GM12878 (cell line): ENCODE measurements at regions of chr1 and their contacts with region 1.

Region 1: DNA sequence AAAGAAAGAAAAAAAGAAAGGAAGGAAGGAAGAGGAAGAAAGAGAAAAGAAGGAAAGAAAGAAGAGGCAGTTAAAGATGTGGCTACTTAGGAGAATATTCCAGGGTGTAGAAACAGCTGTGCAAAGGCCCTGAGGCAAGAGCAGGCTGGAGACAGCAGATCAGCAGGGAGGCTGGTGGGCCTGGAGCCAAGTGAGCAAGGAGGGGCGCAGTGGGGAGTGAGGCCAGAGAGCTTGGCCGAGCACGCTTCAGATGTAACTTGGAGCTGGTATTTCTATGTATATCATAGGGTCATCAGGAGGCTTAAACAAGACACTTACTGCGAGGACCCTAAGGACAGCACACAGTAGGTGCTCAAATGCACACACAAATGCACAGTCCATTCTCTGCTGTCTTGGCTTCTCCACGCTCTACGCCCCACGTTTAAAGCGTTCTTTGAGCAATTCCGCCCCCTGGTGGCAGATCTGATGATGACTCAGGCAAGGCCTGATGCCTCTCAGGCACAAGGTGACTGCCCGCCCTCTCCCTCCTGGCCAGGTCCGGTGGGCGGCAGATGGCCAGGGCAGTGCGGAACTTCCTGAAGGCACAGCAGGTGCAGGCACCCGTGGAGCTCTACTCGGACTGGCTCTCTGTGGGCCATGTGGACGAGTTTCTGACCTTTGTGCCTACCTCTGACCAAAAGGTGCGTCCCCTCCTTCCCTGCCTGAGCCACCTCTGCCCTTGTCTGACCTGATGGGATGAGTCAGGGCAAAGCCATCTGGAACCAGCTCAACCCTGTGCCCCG is 11.9 kb upstream of the PADI3 start:
- DNase-seq: peak; percentile 31
- ATAC-seq: peak; percentile 93
- H3K4me3 ChIP-seq: no peak overlapping the region
- H3K27ac ChIP-seq: no peak overlapping the region
- H3K4me1 ChIP-seq: no peaks in the 10 kb centered on the region
- H3K27me3 ChIP-seq: peaks cover 0 to 2% of the 10 kb centered on the region in 2 experiments; a peak in 1 of 4 replicates
- CTCF ChIP-seq: peak; percentile 78 to 92 (median 82)
- EP300 ChIP-seq: no peak
- POLR2A ChIP-seq: no peak
- RAD21 ChIP-seq: peak; percentile 95

Region 2: GRCh38 chr1:16946646-16947045 is 290.3 kb before region 1 on chr1:
- CTCF ChIA-PET with region 1: no interaction called
- POLR2A ChIA-PET with region 1: no interaction called
- RAD21 ChIA-PET with region 1: interaction called, 3 read pairs
- SMC1A ChIA-PET with region 1: no interaction called
- in situ Hi-C with region 1: loop called (anchors 10 kb)
- intact Hi-C with region 1: no loop called
- DNase-seq: no peak
- ATAC-seq: no peak
- H3K4me3 ChIP-seq: no peak overlapping the region
- H3K27ac ChIP-seq: no peak overlapping the region
- H3K4me1 ChIP-seq: no peaks in the 10 kb centered on the region
- H3K27me3 ChIP-seq: no peaks in the 10 kb centered on the region
- CTCF ChIP-seq: no peak
- EP300 ChIP-seq: no peak
- POLR2A ChIP-seq: no peak
- RAD21 ChIP-seq: no peak

Region 3: GRCh38 chr1:17059739-17060460 is 177.1 kb before region 1 on chr1:
- CTCF ChIA-PET with region 1: interaction called, 32 read pairs
- POLR2A ChIA-PET with region 1: interaction called, 3 read pairs
- RAD21 ChIA-PET with region 1: interaction called, 11 read pairs
- SMC1A ChIA-PET with region 1: interaction called, 29 read pairs
- in situ Hi-C with region 1: loop called (anchors 5 kb)
- intact Hi-C with region 1: loop called (anchors 1 kb)
- DNase-seq: peak; percentile 30
- ATAC-seq: peak; percentile 100
- H3K4me3 ChIP-seq: no peak overlapping the region
- H3K27ac ChIP-seq: no peak overlapping the region
- H3K4me1 ChIP-seq: peaks cover 6% of the 10 kb centered on the region; the same call in 1 of the 2 replicates
- H3K27me3 ChIP-seq: no peaks in the 10 kb centered on the region
- CTCF ChIP-seq: peak; percentile 80 to 93 (median 81)
- EP300 ChIP-seq: no peak
- POLR2A ChIP-seq: no peak
- RAD21 ChIP-seq: peak; percentile 66

Region 4: DNA sequence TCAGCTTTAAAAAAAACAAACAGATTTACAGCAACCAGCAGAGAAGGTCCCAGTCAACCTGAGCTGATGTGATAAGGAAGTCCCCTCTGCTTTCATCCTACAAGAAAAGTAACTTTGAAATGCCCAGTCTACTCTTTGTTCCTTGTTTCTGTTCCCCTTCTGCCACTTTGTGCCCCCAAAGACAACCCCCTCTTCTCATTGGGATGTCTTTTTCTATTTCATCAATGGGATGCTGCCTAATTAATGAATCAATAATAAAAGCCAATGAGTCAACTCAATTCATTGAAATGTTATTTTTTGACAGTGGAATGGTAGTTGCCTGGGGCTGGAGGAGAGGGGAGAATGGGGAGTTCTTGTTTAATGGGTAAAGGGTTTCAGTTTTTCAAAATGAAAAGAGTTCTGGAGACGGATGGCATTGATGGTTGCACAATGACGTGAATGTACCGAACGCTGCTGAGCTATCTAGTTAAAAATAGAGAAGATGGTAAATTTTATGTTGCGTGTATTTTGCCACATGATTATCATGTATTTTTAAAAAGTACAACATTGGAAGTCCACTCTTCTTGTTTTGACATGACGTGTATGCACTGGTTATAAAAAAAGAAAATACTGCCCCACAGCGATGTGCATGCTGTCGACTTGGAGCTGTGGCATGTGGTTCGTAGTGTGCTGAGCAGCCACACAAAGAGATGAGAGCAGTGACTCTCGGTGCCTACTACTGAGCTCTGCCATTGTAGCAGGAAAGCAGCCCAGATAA is 95.4 kb before region 1 on chr1:
- CTCF ChIA-PET with region 1: interaction called, 13 read pairs
- POLR2A ChIA-PET with region 1: interaction called, 5 read pairs
- RAD21 ChIA-PET with region 1: interaction called, 8 read pairs
- SMC1A ChIA-PET with region 1: interaction called, 27 read pairs
- in situ Hi-C with region 1: no loop called
- intact Hi-C with region 1: no loop called
- DNase-seq: peak; percentile 85
- ATAC-seq: peak; percentile 90
- H3K4me3 ChIP-seq: no peak overlapping the region
- H3K27ac ChIP-seq: peak overlapping the region; percentile 78
- H3K4me1 ChIP-seq: peaks cover 15% of the 10 kb centered on the region
- H3K27me3 ChIP-seq: no peaks in the 10 kb centered on the region
- CTCF ChIP-seq: peak in 1 of 3 experiments; percentile 32; a peak in 1 of 6 replicates
- EP300 ChIP-seq: peak; percentile 45 to 84; a peak in 2 of 4 replicates
- POLR2A ChIP-seq: no peak; the same call in 1 of the 2 replicates
- RAD21 ChIP-seq: 0 out of 2 replicates have a peak, but pooled peaks have one; percentile 5

Region 5: GRCh38 chr1:17190010-17190995 is 46.7 kb before region 1 on chr1:
- CTCF ChIA-PET with region 1: no interaction called
- POLR2A ChIA-PET with region 1: no interaction called
- RAD21 ChIA-PET with region 1: no interaction called
- SMC1A ChIA-PET with region 1: no interaction called
- in situ Hi-C with region 1: no loop called
- intact Hi-C with region 1: no loop called
- DNase-seq: no peak
- ATAC-seq: no peak
- H3K4me3 ChIP-seq: no peak overlapping the region
- H3K27ac ChIP-seq: no peak overlapping the region
- H3K4me1 ChIP-seq: no peaks in the 10 kb centered on the region
- H3K27me3 ChIP-seq: no peaks in the 10 kb centered on the region; a peak in 1 of 4 replicates
- CTCF ChIP-seq: no peak
- EP300 ChIP-seq: no peak
- POLR2A ChIP-seq: no peak
- RAD21 ChIP-seq: no peak

Region 6: DNA sequence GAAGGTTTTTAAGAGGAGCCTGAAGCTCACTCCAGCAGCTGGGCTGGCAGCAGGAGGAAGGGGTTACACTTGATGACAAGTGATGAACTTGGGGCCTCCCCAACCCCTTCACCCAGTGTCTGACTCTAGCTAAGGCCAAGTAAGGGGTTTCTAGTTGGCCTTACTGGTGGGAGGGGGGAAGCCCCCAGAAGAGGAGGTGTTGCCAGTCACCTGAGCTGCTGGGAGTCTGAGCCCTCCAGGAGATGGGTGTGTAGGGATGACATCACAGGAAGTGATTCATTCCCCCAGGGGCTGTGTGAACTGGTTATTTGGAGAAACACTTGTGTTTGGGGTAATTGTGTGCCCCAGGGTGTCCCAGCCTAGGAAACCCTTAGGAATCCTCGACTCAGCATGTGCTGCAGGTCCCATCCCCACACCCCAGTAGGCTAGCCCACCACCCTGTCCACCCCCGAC is 29.0 kb before region 1 on chr1:
- CTCF ChIA-PET with region 1: interaction called, 24 read pairs
- POLR2A ChIA-PET with region 1: interaction called, 5 read pairs
- RAD21 ChIA-PET with region 1: interaction called, 3 read pairs
- SMC1A ChIA-PET with region 1: interaction called, 5 read pairs
- in situ Hi-C with region 1: no loop called
- intact Hi-C with region 1: no loop called
- DNase-seq: peak; percentile 72
- ATAC-seq: peak; percentile 87
- H3K4me3 ChIP-seq: no peak overlapping the region
- H3K27ac ChIP-seq: no peak overlapping the region
- H3K4me1 ChIP-seq: peaks cover 14% of the 10 kb centered on the region
- H3K27me3 ChIP-seq: peaks cover 0 to 2% of the 10 kb centered on the region in 2 experiments; a peak in 2 of 4 replicates
- CTCF ChIP-seq: no peak
- EP300 ChIP-seq: peak in 1 of 2 experiments; percentile 61; a peak in 1 of 4 replicates
- POLR2A ChIP-seq: no peak
- RAD21 ChIP-seq: no peak

Region 7: DNA sequence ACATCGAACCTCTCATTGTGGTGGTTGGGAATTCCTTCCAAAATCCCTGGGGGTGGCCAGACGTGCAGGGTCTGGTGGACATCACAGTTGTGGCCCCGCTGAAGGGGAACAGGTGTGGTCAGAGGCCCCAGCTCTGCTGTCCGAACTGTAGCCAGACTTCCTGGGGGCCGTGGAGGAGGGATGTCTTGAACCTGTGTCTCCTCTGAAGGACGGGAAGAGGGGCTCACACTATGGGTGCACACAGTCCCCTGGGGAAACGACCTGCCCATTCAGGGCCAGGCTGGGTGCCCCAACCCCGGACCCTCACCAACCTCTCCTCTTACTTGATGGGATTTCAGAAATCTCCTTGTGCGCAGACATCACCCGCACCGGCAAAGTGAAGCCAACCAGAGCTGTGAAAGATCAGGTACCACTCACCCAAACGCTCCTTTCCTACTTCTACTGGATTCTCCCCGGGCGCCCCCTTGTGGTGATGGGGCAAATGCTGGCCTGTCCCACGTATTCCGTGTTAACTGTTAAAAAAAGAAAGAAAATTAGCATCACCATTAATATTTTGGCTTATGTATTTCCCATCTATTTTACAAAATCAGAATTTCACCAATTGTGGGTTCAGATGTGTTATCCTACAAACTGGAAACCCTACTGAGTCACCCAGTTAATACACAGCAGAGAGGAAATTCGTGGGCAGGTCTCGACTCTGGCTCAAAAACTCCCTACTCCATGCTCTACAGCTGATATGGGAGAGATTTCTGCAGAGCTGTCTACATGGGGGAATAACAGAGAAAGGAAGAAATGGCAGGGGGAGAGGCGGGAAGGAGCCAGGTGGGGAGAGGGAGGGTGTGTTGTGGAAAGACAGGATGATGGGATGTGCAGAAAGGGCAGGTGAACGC is 99.1 kb after region 1 on chr1:
- CTCF ChIA-PET with region 1: no interaction called
- POLR2A ChIA-PET with region 1: no interaction called
- RAD21 ChIA-PET with region 1: no interaction called
- SMC1A ChIA-PET with region 1: no interaction called
- in situ Hi-C with region 1: no loop called
- intact Hi-C with region 1: loop called (anchors 10 kb)
- DNase-seq: no peak
- ATAC-seq: peak; percentile 85
- H3K4me3 ChIP-seq: no peak overlapping the region
- H3K27ac ChIP-seq: no peak overlapping the region
- H3K4me1 ChIP-seq: no peaks in the 10 kb centered on the region
- H3K27me3 ChIP-seq: no peaks in the 10 kb centered on the region; a peak in 1 of 4 replicates
- CTCF ChIP-seq: peak; percentile 66 to 96 (median 88)
- EP300 ChIP-seq: no peak
- POLR2A ChIP-seq: no peak
- RAD21 ChIP-seq: peak; percentile 58